MCF 10A (cell line): ENCODE measurements at regions of chr4 and their contacts with region 1.

Region 1: DNA sequence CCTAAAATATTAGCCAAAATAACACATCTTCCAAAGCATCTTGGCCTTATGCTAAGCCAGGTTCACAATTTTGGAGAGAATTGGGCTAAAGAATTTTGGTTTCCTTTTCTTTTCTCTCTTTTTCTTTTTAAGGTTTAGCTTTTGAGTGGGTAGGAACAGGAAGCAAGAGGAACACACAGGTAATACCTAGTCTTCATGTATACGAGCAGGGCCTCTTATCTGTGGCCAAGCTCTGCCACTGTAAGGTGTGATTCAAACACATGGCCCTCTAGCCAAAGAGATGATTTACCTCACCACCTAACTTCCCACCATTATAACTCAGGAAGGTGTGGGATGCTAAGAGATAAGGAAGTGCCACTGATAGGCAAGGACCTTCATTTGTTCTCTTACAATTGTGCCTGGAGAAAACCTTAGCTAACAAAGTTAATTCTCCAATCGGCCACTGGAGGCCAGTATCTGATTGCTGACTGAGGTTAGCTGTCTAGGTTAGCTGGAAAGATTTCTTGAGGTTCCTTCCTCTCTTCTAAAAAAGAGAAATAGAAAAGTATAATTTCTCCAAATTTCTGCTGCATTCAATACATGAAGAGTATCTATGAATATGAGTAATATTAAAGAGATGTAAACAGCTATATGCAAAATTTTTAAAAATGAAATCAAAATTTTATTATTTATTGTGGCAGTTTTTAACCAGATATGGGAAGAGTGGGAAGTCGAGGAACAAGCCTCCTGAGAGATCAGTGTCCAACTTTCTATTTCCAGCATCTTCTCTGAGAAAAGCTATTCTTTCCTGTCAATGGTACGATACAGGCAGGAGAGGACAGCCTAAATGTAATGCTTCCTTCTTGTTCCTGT is 30.1 kb upstream of the BBS7 start:
- DNase-seq: peak; percentile 73
- H3K4me3 Mint-ChIP-seq: no peak overlapping the region
- H3K27ac Mint-ChIP-seq: no peak overlapping the region
- H3K4me1 Mint-ChIP-seq: no peaks in the 10 kb centered on the region
- H3K27me3 Mint-ChIP-seq: peaks cover 16% of the 10 kb centered on the region
- CTCF ChIP-seq: peak; percentile 86

Region 2: GRCh38 chr4:121888134-121888533 is 12.2 kb before region 1 on chr4:
- CTCF ChIA-PET with region 1: interaction called, 10 read pairs
- POLR2A ChIA-PET with region 1: no interaction called
- intact Hi-C with region 1: no loop called
- DNase-seq: no peak
- H3K4me3 Mint-ChIP-seq: no peak overlapping the region
- H3K27ac Mint-ChIP-seq: no peak overlapping the region
- H3K4me1 Mint-ChIP-seq: no peaks in the 10 kb centered on the region
- H3K27me3 Mint-ChIP-seq: no peaks in the 10 kb centered on the region
- CTCF ChIP-seq: no peak

Region 3: GRCh38 chr4:121923306-121923705 is 22.9 kb after region 1 on chr4:
- CTCF ChIA-PET with region 1: interaction called, 13 read pairs
- POLR2A ChIA-PET with region 1: no interaction called
- intact Hi-C with region 1: no loop called
- DNase-seq: no peak
- H3K4me3 Mint-ChIP-seq: no peak overlapping the region
- H3K27ac Mint-ChIP-seq: no peak overlapping the region
- H3K4me1 Mint-ChIP-seq: no peaks in the 10 kb centered on the region
- H3K27me3 Mint-ChIP-seq: no peaks in the 10 kb centered on the region
- CTCF ChIP-seq: no peak

Region 4: DNA sequence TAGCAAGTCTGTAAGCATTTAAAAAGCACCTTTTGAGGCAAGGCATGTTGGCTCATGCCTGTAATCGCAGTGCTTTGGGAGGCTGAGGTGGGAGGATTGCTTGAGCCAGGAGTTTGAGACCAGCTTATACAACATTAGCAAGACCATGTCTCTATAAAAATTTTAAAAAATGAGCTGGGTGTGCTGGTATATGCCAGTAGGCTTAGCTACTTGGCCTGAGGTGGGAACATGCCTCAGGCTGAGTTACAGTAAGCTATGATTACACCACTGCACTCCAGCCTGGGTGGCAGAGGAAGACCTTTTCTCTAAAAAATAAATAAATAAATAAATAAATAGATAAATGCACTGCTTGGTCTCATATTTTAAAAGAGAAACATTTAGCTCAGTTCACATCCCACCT is 278.6 kb after region 1 on chr4:
- CTCF ChIA-PET with region 1: interaction called, 11 read pairs
- POLR2A ChIA-PET with region 1: no interaction called
- intact Hi-C with region 1: no loop called
- DNase-seq: no peak
- H3K4me3 Mint-ChIP-seq: no peak overlapping the region
- H3K27ac Mint-ChIP-seq: no peak overlapping the region
- H3K4me1 Mint-ChIP-seq: no peaks in the 10 kb centered on the region
- H3K27me3 Mint-ChIP-seq: no peaks in the 10 kb centered on the region
- CTCF ChIP-seq: no peak

Region 5: GRCh38 chr4:122309988-122310626 is 409.7 kb after region 1 on chr4:
- CTCF ChIA-PET with region 1: no interaction called
- POLR2A ChIA-PET with region 1: no interaction called
- intact Hi-C with region 1: loop called (anchors 5 kb)
- DNase-seq: peak; percentile 9
- H3K4me3 Mint-ChIP-seq: no peak overlapping the region
- H3K27ac Mint-ChIP-seq: no peak overlapping the region
- H3K4me1 Mint-ChIP-seq: no peaks in the 10 kb centered on the region
- H3K27me3 Mint-ChIP-seq: no peaks in the 10 kb centered on the region
- CTCF ChIP-seq: peak; percentile 48

Region 6: GRCh38 chr4:122577808-122578781 is 677.7 kb after region 1 on chr4:
- CTCF ChIA-PET with region 1: interaction called, 46 read pairs
- POLR2A ChIA-PET with region 1: no interaction called
- intact Hi-C with region 1: loop called (anchors 1 kb)
- DNase-seq: peak; percentile 78
- H3K4me3 Mint-ChIP-seq: no peak overlapping the region
- H3K27ac Mint-ChIP-seq: no peak overlapping the region
- H3K4me1 Mint-ChIP-seq: peaks cover 7% of the 10 kb centered on the region
- H3K27me3 Mint-ChIP-seq: peaks cover 10% of the 10 kb centered on the region
- CTCF ChIP-seq: peak; percentile 60